Caco-2 (cell line): ENCODE measurements at regions of chr16 and their contacts with region 1.

Region 1: DNA sequence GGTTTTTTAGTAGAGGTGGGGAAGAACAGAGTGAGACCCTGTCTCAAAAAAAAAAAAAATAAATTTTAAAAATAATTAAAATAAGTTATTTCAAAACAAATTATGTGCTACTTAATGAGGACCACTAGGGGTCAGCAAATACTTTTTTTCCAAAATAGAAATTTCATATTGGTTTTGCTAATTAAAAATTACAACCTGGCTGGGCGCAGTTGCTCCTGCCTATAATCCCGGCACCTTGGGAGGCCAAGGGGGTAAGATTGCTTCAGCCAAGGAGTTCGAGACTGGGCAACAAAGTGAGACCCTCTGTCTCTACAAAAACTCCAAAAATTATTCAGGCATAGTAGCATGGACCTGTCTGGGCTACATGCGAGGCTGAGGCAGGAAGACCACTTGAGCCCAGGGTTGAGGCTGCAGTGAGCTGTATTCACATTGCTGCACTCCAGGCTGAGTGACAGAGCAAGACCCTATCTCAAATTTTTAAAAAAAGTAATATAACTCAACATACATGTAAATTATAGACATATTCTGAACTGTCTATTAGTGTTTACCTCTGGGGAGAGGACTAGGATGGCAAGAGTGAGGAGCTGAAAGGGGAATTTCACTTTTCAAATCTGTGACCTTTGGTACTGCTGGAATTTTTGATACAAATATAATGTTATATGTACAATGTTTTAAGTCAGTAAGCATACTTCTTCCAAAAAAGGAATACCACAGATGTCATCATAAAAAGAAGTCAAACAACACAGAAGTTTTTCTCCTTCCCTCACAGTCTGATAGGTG is 8.1 kb downstream of the MEIOB start:
- DNase-seq: no peak
- H3K4me3 ChIP-seq: no peak overlapping the region
- H3K4me3 Mint-ChIP-seq: no peak overlapping the region
- H3K27ac Mint-ChIP-seq: no peak overlapping the region
- H3K4me1 ChIP-seq: no peaks in the 10 kb centered on the region
- H3K4me1 Mint-ChIP-seq: no peaks in the 10 kb centered on the region
- H3K27me3 ChIP-seq: no peaks in the 10 kb centered on the region
- H3K27me3 Mint-ChIP-seq: peaks cover 5% of the 10 kb centered on the region
- CTCF ChIP-seq: peak; percentile 51 to 52

Region 2: DNA sequence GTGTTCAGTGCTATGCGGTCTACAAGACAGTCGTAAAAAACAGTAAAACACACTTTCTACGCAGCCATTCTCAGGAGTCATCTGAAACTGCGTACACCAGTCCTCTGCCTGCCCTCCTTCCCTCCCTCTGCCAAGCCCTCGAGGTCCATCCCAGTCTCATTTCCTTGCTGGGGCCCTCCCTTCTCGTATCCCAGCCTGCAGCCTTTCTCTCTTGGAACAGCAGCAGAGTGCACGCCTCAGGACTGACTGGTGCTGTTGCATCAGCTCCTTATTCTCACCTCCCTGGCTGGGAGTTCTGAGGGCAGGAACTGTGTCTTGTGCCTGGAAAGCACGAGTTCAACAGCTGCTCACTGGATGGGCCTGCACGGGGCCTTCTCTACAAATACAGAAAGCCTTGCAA is 24.3 kb before region 1 on chr16:
- CTCF ChIA-PET with region 1: no interaction called
- POLR2A ChIA-PET with region 1: no interaction called
- intact Hi-C with region 1: no loop called
- DNase-seq: no peak
- H3K4me3 ChIP-seq: no peak overlapping the region
- H3K4me3 Mint-ChIP-seq: no peak overlapping the region
- H3K27ac Mint-ChIP-seq: no peak overlapping the region
- H3K4me1 ChIP-seq: no peaks in the 10 kb centered on the region
- H3K4me1 Mint-ChIP-seq: no peaks in the 10 kb centered on the region
- H3K27me3 ChIP-seq: no peaks in the 10 kb centered on the region
- H3K27me3 Mint-ChIP-seq: no peaks in the 10 kb centered on the region
- CTCF ChIP-seq: no peak

Region 3: GRCh38 chr16:1929578-1930337 is 65.9 kb after region 1 on chr16:
- CTCF ChIA-PET with region 1: interaction called, 8 read pairs
- POLR2A ChIA-PET with region 1: no interaction called
- intact Hi-C with region 1: loop called (anchors 1 kb)
- DNase-seq: peak; percentile 80 to 95
- H3K4me3 ChIP-seq: peak overlapping the region; percentile 63
- H3K4me3 Mint-ChIP-seq: peak overlapping the region; percentile 69
- H3K27ac Mint-ChIP-seq: no peak overlapping the region
- H3K4me1 ChIP-seq: peaks cover 5% of the 10 kb centered on the region
- H3K4me1 Mint-ChIP-seq: no peaks in the 10 kb centered on the region
- H3K27me3 ChIP-seq: no peaks in the 10 kb centered on the region
- H3K27me3 Mint-ChIP-seq: no peaks in the 10 kb centered on the region
- CTCF ChIP-seq: peak; percentile 32 to 94